ENCODE measurements at regions of chr7 and their contacts with region 1.

Region 1: DNA sequence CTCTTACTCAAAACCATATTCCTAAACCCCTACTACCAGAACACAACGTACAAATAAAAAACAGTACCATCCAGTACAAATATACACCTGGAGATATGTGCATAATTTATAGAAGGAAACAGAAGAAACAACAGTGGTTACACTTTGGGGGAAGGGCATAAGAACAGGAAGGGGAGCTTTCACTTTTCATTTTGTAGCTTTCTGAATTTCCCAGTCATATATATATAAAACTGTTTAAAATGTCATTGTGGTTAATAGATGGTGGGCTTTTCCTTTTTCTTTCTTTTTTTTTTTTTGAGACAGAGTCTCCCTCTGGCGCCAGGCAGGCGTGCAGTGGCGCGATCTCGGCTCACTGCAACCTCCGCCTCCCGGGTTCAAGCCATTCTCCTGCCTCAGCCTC is 47.2 kb downstream of the MALSU1 start:
- DNase-seq: peak in 3 of 10 donors; percentile 25 to 53 (median 47)
- ATAC-seq: peak; percentile 79 to 81
- H3K4me3 Mint-ChIP-seq: peak overlapping the region; percentile 78 to 90 (median 86)
- H3K27ac Mint-ChIP-seq: peak overlapping the region; percentile 56 to 93 (median 88)
- H3K4me1 Mint-ChIP-seq: peaks cover 3 to 30% (median 21%) of the 10 kb centered on the region in 4 donors
- H3K27me3 Mint-ChIP-seq: no peaks in the 10 kb centered on the region

Region 2: DNA sequence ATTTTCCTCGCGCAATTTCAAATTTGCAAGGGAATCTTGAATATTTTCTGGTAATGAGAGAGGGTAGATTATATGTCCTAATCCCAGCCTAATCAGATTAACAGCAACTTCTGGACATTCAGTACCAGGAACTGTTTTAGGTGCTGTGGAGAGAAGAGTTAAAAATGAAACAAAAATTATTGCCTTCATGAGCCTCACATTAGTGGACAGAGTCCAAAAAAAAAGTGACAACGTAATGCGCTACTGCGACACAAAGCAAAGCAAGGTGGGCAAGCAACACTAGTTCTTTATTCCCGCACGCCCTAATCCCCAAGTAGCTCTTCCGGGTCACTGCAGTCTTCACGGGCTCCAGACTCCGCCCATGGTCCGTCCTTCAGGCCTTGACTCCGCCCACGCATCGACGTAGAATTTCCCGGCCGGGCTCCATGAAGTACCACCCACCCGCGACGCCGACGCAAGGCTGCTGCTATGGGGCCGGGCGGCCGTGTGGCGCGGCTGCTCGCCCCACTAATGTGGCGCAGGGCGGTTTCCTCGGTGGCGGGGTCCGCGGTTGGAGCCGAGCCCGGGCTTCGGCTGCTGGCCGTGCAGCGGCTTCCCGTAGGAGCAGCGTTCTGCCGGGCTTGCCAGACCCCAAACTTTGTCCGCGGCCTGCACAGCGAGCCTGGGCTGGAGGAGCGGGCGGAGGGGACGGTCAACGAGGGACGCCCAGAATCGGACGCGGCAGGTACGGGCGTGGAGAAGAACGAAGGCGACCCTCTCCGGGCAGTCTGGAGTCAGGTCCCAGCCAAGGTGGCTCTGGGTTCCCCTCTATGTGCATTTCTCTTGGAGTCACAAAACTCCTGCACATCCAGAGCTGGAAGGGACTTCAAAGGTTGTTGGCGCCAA is 47.2 kb before region 1 on chr7 and contains the start of gene MALSU1:
- POLR2A ChIA-PET with region 1: interaction called, 13 read pairs
- DNase-seq: peak; percentile 88 to 97 (median 95)
- ATAC-seq: peak; percentile 98 to 99
- H3K4me3 Mint-ChIP-seq: peak within 1 kb of the TSS; percentile 87 to 95 (median 92)
- H3K27ac Mint-ChIP-seq: peak within 1 kb of the TSS; percentile 94 to 99 (median 98)
- H3K4me1 Mint-ChIP-seq: peaks cover 27 to 51% (median 46%) of the 10 kb centered on the region in 4 donors
- H3K27me3 Mint-ChIP-seq: no peaks in the 10 kb centered on the region
- polyA plus RNA-seq, gene MALSU1: 47.6 to 71.6 (median 69.9) TPM

Region 3: DNA sequence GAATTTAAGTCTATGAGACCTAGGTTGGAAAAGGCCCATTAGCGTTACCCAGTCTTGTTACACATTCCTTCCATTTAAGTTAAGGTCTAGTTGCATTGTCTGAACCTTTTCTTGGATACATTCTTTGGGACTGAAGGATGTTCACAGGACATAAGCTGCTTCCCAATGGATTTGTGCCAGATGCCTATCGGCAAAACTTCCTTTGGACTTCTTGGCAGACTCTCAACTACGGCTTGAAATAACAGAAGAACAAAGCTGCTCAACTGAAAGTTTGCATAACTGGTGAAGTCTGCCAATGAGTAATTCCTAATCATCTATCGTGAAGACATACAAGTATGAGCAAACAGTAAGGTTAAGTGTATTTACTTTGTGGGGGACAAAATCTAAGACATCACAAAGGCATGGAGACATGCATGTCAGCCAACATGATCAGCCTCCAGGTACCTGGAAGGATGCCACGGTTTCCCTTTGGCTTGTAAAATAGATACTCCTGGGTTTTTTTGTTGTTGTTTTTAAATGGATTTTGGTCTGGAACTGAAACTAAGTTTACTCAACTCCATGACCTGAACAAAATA is 11.7 kb before region 1 on chr7:
- POLR2A ChIA-PET with region 1: no interaction called
- DNase-seq: no peak
- ATAC-seq: no peak
- H3K4me3 Mint-ChIP-seq: no peak overlapping the region
- H3K27ac Mint-ChIP-seq: peak overlapping the region in 1 of 10 donors; percentile 34
- H3K4me1 Mint-ChIP-seq: peaks cover 0 to 3% (median 0%) of the 10 kb centered on the region in 4 donors
- H3K27me3 Mint-ChIP-seq: peaks cover 0 to 13% (median 4%) of the 10 kb centered on the region in 5 donors

Measured in naive thymus-derived CD8-positive, alpha-beta T cell (primary cell).